ENCODE measurements at regions of chr16 and their contacts with region 1.

Region 1: DNA sequence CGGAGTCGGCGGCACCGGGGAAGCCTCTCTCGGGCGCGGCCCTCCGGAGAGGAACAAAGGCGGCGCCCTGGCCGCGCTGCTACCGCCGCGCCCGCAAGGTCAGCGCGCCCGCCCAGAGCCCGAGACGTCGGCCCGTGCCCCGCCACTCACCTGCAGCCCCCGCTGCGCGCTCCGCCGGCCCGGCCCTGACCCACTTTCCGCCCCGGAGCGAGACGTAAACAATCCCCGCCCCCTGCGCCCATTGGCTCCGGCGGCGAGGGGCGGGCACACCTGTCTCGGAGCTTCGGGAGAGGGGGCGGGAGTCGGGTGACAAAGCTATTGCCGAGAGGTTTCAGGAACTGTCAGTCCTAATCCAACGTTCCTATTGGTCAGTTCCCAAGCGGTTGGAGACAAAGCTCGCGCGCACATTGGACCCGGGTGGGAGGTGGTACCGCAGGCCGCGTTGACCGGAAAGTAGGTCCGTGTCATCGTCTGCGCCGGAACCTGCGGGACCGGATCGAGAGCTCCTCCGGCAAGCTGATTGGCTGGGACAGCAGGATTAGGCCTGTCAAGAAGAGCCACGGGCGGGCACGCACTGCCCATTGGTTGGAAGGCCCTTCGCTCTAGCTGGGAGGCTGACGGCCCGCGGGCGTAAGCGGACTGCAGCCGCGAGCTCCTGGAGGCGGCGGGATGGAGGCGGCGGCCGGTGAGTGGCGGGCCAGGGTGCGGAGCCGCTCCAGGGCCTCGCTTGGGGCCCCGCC is at the starts of genes NUBP2 and SPSB3:
- DNase-seq: peak; percentile 100
- ATAC-seq: peak; percentile 97 to 98
- H3K4me3 ChIP-seq: peak within 1 kb of the TSS; percentile 67 to 93 (median 78)
- H3K27ac ChIP-seq: peak within 1 kb of the TSS; percentile 77 to 92 (median 86)
- H3K4me1 ChIP-seq: peaks cover 30 to 38% of the 10 kb centered on the region in 2 donors
- H3K27me3 ChIP-seq: no peaks in the 10 kb centered on the region
- CTCF ChIP-seq: no peak
- POLR2A ChIP-seq: peak; percentile 76 to 93
- total RNA-seq, gene NUBP2: 77.3 to 163 (median 80.7) TPM
- total RNA-seq, gene SPSB3: 86.2 to 161 (median 88.3) TPM

Region 2: DNA sequence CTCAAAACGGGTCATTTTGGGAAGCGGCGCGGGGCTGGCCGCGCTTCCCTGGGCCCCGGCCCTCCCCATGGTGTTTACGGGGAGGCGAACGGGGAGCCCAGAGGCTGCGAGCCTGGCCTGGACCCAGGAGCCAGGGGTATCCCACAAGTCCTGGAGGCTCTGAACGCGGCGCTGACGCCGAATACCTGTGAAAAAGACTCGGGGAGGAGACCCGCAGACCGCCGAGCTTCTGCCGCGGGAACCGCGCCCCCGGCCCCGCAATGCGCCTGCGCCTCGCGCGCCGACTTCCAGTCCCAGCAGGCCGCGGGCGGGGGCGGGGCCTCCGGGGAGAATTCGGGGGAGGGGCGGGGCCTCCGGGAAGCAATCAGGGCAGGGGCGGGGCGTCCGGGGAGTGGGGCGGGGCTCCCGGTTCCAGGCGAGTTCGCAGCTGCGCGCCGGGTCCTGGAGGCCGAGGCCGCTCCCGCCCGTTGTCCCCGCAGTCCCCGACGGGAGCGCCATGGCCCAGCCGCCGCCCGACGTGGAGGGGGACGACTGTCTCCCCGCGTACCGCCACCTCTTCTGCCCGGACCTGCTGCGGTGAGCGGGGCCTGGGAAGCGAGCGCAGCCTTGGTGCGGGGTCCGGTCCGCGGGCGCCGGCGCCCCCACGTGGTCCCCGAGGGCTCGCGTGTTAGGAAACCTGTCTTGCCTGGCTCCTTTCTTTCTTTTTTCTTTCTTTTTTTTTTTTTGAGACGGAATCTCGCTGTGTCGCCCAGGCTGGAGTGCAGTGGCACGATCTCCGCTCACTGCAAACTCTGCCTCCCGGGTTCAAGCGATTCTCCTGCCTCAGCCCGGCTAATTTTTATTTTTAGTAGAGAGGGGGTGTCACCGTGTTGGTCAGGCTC is 1380.8 kb before region 1 on chr16 and contains the start of gene DECR2:
- in situ Hi-C with region 1: no loop called
- intact Hi-C with region 1: no loop called
- DNase-seq: peak; percentile 93
- ATAC-seq: peak; percentile 83 to 84
- H3K4me3 ChIP-seq: peak within 1 kb of the TSS; percentile 85 to 98 (median 91)
- H3K27ac ChIP-seq: peak within 1 kb of the TSS; percentile 88 to 98 (median 96)
- H3K4me1 ChIP-seq: peaks cover 16 to 18% of the 10 kb centered on the region in 2 donors
- H3K27me3 ChIP-seq: no peaks in the 10 kb centered on the region
- CTCF ChIP-seq: peak in 4 of 5 experiments; percentile 45 to 55 (median 50)
- POLR2A ChIP-seq: peak; percentile 89 to 93
- total RNA-seq, gene DECR2: 17.0 to 23.3 (median 18.8) TPM

Region 3: DNA sequence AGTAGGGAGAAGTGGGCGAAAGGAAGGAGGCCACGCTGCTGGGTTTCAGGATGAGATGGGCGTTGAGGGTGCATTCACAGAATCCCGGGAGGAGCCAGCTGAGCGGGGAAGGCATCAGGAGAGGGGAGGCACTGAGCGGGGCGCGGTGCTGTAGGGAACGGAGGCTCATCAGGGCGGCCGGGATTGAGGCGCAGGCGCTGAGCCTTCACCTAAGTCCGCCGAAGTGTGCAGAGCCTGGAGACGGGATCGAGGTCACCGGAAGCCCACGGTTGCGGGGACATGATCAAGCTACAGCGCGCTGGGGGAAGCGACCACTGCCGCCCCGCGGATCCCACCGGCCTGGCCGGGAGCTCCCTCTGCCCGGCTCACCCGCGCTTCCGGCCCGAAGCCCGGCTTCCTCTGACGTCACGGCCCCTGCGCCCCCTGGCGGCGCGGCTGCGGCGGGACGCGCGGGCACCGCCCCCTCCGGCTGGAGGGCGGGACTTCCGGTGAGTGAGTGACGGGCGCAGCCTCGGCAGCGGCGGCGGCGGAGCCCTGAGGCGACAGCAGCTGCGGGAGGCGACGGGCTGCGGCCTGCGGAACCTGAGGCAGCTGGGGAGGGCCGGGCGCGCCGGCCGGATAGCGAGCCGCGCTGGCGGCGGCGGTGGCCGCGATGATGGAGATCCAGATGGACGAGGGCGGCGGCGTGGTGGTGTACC is 76.7 kb before region 1 on chr16 and contains the start of gene MAPK8IP3:
- in situ Hi-C with region 1: no loop called
- intact Hi-C with region 1: loop called (anchors 5 kb)
- DNase-seq: peak; percentile 75 to 88
- ATAC-seq: peak; percentile 86 to 91
- H3K4me3 ChIP-seq: peak within 1 kb of the TSS; percentile 85 to 96 (median 88)
- H3K27ac ChIP-seq: peak within 1 kb of the TSS; percentile 89 to 94 (median 92)
- H3K4me1 ChIP-seq: peaks cover 28 to 31% of the 10 kb centered on the region in 2 donors
- H3K27me3 ChIP-seq: no peaks in the 10 kb centered on the region
- CTCF ChIP-seq: peak; percentile 68 to 100 (median 100)
- POLR2A ChIP-seq: peak; percentile 97 to 99
- total RNA-seq, gene MAPK8IP3: 6.5 to 22.6 (median 13.9) TPM

Region 4: DNA sequence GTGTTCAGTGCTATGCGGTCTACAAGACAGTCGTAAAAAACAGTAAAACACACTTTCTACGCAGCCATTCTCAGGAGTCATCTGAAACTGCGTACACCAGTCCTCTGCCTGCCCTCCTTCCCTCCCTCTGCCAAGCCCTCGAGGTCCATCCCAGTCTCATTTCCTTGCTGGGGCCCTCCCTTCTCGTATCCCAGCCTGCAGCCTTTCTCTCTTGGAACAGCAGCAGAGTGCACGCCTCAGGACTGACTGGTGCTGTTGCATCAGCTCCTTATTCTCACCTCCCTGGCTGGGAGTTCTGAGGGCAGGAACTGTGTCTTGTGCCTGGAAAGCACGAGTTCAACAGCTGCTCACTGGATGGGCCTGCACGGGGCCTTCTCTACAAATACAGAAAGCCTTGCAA is 57.0 kb after region 1 on chr16:
- in situ Hi-C with region 1: no loop called
- intact Hi-C with region 1: no loop called
- DNase-seq: no peak
- ATAC-seq: no peak
- H3K4me3 ChIP-seq: no peak overlapping the region
- H3K27ac ChIP-seq: no peak overlapping the region
- H3K4me1 ChIP-seq: no peaks in the 10 kb centered on the region
- H3K27me3 ChIP-seq: no peaks in the 10 kb centered on the region
- CTCF ChIP-seq: no peak
- POLR2A ChIP-seq: no peak

Region 5: DNA sequence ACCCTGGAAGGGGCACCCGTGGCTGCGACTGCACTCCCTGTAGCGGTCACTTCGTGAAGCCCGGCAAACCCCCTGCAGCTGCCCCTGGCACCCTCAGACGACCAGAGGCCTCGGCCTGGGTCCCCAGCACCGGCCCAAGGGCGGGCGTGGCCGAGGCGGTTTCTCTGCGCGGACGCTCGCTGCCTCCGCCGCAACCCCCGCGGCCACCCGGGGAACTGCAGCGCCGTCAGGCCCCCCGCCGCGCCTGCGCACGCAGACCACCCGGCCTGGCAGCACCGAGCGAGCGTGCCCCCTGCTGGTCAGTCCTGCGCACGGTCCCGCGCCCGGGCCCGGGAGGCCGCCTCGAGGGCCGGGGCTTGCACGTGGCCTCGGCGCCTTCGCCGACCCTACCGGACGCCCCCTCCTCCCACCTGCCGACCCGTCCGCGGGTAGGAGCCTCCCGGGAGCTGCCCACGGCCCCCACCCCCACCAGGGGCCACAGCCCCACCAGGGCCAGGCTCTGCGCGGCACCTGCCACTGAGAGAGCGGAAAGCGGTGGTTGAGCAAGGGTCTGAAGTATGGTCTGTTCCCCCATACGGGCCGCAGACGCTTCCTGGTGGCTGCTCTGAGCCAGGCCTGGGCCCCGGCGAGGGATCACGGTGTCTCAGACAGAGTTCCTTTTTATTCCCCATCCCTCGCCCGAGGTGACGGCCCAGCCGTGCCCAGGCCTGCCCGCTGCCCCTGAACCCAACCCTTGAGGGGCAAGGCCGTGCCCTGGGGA is 147.2 kb after region 1 on chr16:
- in situ Hi-C with region 1: no loop called
- intact Hi-C with region 1: loop called (anchors 5 kb)
- DNase-seq: peak; percentile 74 to 84
- ATAC-seq: peak; percentile 85 to 87
- H3K4me3 ChIP-seq: peak overlapping the region; percentile 49 to 69 (median 66)
- H3K27ac ChIP-seq: peak overlapping the region; percentile 52 to 83 (median 76)
- H3K4me1 ChIP-seq: no peaks in the 10 kb centered on the region
- H3K27me3 ChIP-seq: no peaks in the 10 kb centered on the region
- CTCF ChIP-seq: peak in 4 of 5 experiments; percentile 100
- POLR2A ChIP-seq: peak; percentile 17 to 31

Measured in gastrocnemius medialis (tissue), 4 donors.